ENCODE measurements at regions of chr9 and their contacts with region 1.

Region 1: GRCh38 chr9:33466565-33467495 is 6.9 kb downstream of the NOL6 start:
- DNase-seq: peak; percentile 55 to 75
- ATAC-seq: peak; percentile 74 to 90
- H3K4me3 ChIP-seq: no peak overlapping the region
- H3K27ac ChIP-seq: peak overlapping the region in 1 of 2 experiments; percentile 57; a peak in 2 of 6 replicates
- H3K4me1 ChIP-seq: peaks cover 4% of the 10 kb centered on the region
- CTCF ChIP-seq: peak; percentile 88
- EP300 ChIP-seq: no peak
- POLR2A ChIP-seq: no peak
- RAD21 ChIP-seq: peak; percentile 90 to 92

Region 2: GRCh38 chr9:33393581-33393980 is 73.2 kb before region 1 on chr9:
- CTCF ChIA-PET with region 1: interaction called, 299 read pairs
- POLR2A ChIA-PET with region 1: no interaction called
- DNase-seq: no peak
- ATAC-seq: no peak
- H3K4me3 ChIP-seq: no peak overlapping the region
- H3K27ac ChIP-seq: no peak overlapping the region; a peak in 1 of 6 replicates
- H3K4me1 ChIP-seq: peaks cover 32% of the 10 kb centered on the region
- CTCF ChIP-seq: no peak
- EP300 ChIP-seq: no peak
- POLR2A ChIP-seq: no peak
- RAD21 ChIP-seq: no peak

Region 3: DNA sequence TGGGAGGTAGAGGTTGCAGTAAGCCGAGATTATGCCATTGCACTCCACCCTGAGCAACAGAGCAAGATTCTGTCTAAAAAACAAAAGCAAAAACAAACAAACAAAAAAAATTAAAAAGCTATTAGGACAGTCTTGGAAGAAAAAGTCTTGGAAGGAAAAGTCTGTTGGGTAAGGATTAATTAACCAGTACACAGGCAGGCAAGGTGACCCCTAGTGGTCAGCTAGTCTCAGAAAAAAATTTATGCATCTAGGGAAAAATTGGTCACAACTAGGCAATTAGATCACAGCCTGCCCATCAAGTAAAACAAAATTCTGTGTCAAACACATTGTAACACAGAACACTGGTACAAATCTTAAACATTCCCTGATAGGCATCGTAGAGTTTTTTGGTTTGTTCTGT is 50.5 kb after region 1 on chr9:
- CTCF ChIA-PET with region 1: interaction called, 15 read pairs
- POLR2A ChIA-PET with region 1: no interaction called
- DNase-seq: peak; percentile 40 to 65
- ATAC-seq: peak; percentile 80 to 82
- H3K4me3 ChIP-seq: no peak overlapping the region
- H3K27ac ChIP-seq: peak overlapping the region in 1 of 2 experiments; percentile 61; a peak in 2 of 6 replicates
- H3K4me1 ChIP-seq: peaks cover 36% of the 10 kb centered on the region; the same call in 2 of the 3 replicates
- CTCF ChIP-seq: peak; percentile 72
- EP300 ChIP-seq: no peak
- POLR2A ChIP-seq: no peak
- RAD21 ChIP-seq: peak; percentile 43 to 47; a peak in 3 of 5 replicates

Region 4: DNA sequence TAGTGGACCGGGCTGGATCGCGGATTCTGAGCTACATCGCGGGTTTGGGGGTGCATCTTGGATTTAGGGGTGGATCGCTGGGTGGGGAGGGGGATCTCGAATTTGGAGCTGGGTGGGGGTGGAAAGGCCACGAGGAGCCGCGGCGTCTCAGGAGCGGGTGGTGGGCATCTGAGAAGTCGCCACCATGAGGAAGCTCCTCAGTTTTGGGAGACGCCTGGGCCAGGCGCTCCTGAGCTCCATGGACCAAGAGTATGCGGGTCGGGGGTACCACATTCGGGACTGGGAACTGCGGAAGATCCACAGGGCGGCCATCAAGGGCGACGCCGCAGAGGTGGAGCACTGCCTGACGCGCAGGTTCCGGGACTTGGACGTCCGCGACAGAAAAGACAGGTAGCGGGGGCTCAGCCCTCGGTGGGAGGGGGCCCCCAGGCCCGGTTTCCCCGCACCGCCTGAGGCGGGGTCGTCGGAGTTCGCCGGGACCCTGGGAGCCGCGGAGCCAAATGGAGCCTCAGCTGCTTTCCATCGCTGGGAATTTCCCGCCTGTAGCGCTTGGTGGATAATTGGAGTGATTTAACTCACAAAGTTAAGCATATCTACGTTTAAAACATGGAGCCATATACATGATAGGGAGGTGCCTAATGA is 57.6 kb after region 1 on chr9:
- CTCF ChIA-PET with region 1: interaction called, 15 read pairs
- POLR2A ChIA-PET with region 1: no interaction called
- DNase-seq: peak in 1 of 2 experiments; percentile 33
- ATAC-seq: peak; percentile 77 to 83
- H3K4me3 ChIP-seq: peak overlapping the region; percentile 68
- H3K27ac ChIP-seq: peak overlapping the region; percentile 98 to 99
- H3K4me1 ChIP-seq: peaks cover 24% of the 10 kb centered on the region; the same call in 2 of the 3 replicates
- CTCF ChIP-seq: no peak
- EP300 ChIP-seq: no peak
- POLR2A ChIP-seq: peak; percentile 50
- RAD21 ChIP-seq: no peak

Region 5: GRCh38 chr9:33714989-33715388 is 248.2 kb after region 1 on chr9:
- CTCF ChIA-PET with region 1: no interaction called
- POLR2A ChIA-PET with region 1: no interaction called
- DNase-seq: no peak
- ATAC-seq: no peak
- H3K4me3 ChIP-seq: no peak overlapping the region
- H3K27ac ChIP-seq: no peak overlapping the region
- H3K4me1 ChIP-seq: peaks cover 5% of the 10 kb centered on the region; the same call in 1 of the 3 replicates
- CTCF ChIP-seq: no peak
- EP300 ChIP-seq: no peak
- POLR2A ChIP-seq: no peak
- RAD21 ChIP-seq: no peak

Measured in A549 (cell line).